ENCODE measurements at regions of chr11 and their contacts with region 1.

Region 1: GRCh38 chr11:133156986-133157745 is 375.1 kb downstream of the OPCML start:
- DNase-seq: no peak
- H3K4me3 ChIP-seq: no peak overlapping the region
- H3K27ac ChIP-seq: no peak overlapping the region
- H3K4me1 ChIP-seq: peaks cover 0 to 4% (median 2%) of the 10 kb centered on the region in 4 experiments; a peak in 3 of 7 replicates
- H3K27me3 ChIP-seq: no peaks in the 10 kb centered on the region
- CTCF ChIP-seq: peak; percentile 77 to 85 (median 80)
- EP300 ChIP-seq: no peak
- POLR2A ChIP-seq: no peak
- RAD21 ChIP-seq: peak; percentile 82 to 88

Region 2: GRCh38 chr11:133040289-133040900 is 116.8 kb before region 1 on chr11:
- CTCF ChIA-PET with region 1: no interaction called
- POLR2A ChIA-PET with region 1: no interaction called
- DNase-seq: peak in 1 of 2 experiments; percentile 15
- H3K4me3 ChIP-seq: no peak overlapping the region
- H3K27ac ChIP-seq: no peak overlapping the region
- H3K4me1 ChIP-seq: peaks cover 0 to 4% (median 0%) of the 10 kb centered on the region in 4 experiments; a peak in 2 of 7 replicates
- H3K27me3 ChIP-seq: no peaks in the 10 kb centered on the region
- CTCF ChIP-seq: no peak
- EP300 ChIP-seq: no peak
- POLR2A ChIP-seq: no peak
- RAD21 ChIP-seq: no peak

Region 3: DNA sequence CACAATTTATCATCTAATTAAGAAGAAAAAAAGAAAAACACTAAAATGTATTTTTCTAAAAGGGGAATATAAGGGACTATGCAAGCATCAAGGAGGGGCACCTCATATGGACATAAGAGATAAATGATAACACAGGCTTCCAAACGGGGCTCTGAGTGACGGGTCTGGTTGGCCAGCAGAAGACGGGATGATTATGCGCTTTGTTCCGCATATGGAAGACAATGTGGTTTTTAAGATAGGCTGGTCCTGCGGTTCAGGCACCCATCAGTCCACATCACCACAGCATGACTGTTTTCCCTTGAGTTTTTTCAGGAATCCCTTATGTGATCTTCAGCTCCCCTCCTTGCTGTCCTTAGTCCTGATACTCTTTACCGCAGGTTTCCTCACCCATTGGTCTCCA is 29.4 kb before region 1 on chr11:
- CTCF ChIA-PET with region 1: interaction called, 84 read pairs
- POLR2A ChIA-PET with region 1: no interaction called
- DNase-seq: no peak
- H3K4me3 ChIP-seq: no peak overlapping the region
- H3K27ac ChIP-seq: no peak overlapping the region
- H3K4me1 ChIP-seq: no peaks in the 10 kb centered on the region; a peak in 1 of 7 replicates
- H3K27me3 ChIP-seq: no peaks in the 10 kb centered on the region
- CTCF ChIP-seq: no peak
- EP300 ChIP-seq: no peak
- POLR2A ChIP-seq: no peak
- RAD21 ChIP-seq: no peak

Region 4: DNA sequence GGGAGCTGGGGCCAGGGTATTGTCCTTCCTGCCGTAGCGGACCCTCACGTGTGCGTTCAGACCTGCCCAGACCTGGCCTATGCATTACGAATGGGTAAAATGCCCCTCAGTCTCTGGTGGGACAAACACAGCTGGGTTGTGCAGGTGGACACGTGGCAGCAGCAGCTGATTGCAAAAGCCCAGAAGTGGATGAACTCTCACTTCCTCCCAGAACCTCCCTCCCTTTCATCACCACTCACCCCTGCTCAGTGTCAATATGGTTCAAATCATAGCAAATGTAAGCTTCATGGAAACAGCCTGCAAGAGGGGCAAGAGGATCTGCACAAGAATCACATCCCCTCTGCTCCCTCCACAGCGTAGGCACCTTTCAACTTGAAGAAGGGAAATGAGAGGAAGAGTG is 23.0 kb after region 1 on chr11:
- CTCF ChIA-PET with region 1: interaction called, 11 read pairs
- POLR2A ChIA-PET with region 1: no interaction called
- DNase-seq: no peak
- H3K4me3 ChIP-seq: no peak overlapping the region
- H3K27ac ChIP-seq: no peak overlapping the region
- H3K4me1 ChIP-seq: no peaks in the 10 kb centered on the region
- H3K27me3 ChIP-seq: no peaks in the 10 kb centered on the region
- CTCF ChIP-seq: no peak
- EP300 ChIP-seq: no peak
- POLR2A ChIP-seq: no peak
- RAD21 ChIP-seq: no peak

Region 5: GRCh38 chr11:133197425-133197824 is 40.3 kb after region 1 on chr11:
- CTCF ChIA-PET with region 1: no interaction called
- POLR2A ChIA-PET with region 1: no interaction called
- DNase-seq: no peak
- H3K4me3 ChIP-seq: no peak overlapping the region
- H3K27ac ChIP-seq: no peak overlapping the region
- H3K4me1 ChIP-seq: no peaks in the 10 kb centered on the region
- H3K27me3 ChIP-seq: no peaks in the 10 kb centered on the region
- CTCF ChIP-seq: no peak
- EP300 ChIP-seq: no peak
- POLR2A ChIP-seq: no peak
- RAD21 ChIP-seq: no peak

Measured in H1 (cell line).